Dorsolateral prefrontal cortex (tissue), 120 donors: ENCODE measurements at regions of chr7 and their contacts with region 1.

Region 1: GRCh38 chr7:124723012-124723411 is 42.6 kb downstream of the GPR37 start:
- DNase-seq: no peak
- H3K4me3 ChIP-seq: no peak overlapping the region
- H3K27ac ChIP-seq: peak overlapping the region in 58 of 59 donors; percentile 56 to 98 (median 94)
- H3K27me3 ChIP-seq: no peaks in the 10 kb centered on the region
- CTCF ChIP-seq: no peak

Region 2: GRCh38 chr7:124649397-124650029 is 73.5 kb before region 1 on chr7:
- intact Hi-C with region 1: loop called in 1 of 2 experiments (anchors 10 kb)
- DNase-seq: no peak
- H3K4me3 ChIP-seq: peak overlapping the region in 46 of 59 donors; percentile 1 to 55 (median 36)
- H3K27ac ChIP-seq: peak overlapping the region in 6 of 59 donors; percentile 19 to 53 (median 28)
- H3K27me3 ChIP-seq: no peaks in the 10 kb centered on the region
- CTCF ChIP-seq: no peak

Region 3: DNA sequence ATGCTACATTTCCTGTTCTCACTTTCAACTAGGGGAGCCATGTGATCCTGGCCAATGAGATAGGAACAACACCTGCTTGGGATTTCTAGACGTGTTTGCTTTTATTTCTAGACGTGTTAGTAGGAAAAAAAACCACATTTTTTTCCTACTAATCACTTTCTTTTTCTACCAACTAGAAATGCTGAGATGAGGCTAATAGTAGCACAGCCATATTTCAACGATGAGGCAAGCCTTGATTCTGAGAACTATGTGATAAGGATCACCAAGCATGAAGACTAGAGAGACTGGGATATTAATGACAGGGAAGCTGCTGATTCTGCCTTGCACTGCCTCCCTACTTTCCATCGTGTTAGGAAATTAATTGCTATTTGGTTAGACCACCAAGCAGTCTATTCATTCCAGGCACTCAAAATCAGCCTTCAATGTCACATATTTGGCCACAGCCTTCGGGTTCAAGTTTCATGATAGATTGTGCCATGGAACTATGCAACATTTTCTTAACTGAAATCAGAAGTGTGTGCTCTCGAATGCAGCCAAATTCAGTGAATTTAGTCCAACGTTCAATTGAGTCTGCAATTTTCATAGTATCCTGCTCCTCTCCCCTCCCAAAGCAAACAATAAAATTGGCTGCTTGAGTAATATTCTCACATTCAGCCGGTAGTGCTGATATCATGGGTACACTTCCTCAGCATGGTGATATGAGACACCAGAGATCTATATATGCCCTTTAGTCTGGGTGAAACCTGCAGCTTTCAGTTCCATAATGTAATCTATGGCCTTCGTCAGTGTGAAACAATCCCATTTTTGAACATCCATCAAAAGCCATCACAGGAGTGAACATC is 55.5 kb before region 1 on chr7:
- intact Hi-C with region 1: loop called in 1 of 2 experiments (anchors 5 kb)
- DNase-seq: no peak
- H3K4me3 ChIP-seq: peak overlapping the region in 4 of 59 donors; percentile 1 to 21 (median 8)
- H3K27ac ChIP-seq: peak overlapping the region in 5 of 59 donors; percentile 8 to 47 (median 18)
- H3K27me3 ChIP-seq: no peaks in the 10 kb centered on the region
- CTCF ChIP-seq: no peak

Region 4: DNA sequence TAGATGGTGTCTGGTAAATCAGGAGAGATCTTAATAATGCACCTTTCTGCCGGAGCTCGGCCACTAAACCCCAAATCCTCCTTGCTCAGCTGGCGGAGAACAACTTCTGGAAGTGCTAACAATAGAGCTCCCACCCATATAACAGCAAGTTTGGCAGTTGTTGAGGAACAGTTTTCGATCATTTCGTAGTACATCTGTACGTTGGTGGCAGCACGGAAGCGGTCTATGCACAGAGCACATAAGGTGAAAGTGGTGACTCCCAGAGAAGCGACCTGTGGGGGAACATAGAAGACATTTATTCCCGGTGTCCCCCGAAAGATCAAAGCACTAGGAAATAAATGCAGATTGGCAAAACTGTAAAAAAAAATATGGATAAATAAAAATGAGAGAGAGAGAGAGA is 24.1 kb after region 1 on chr7:
- intact Hi-C with region 1: loop called in 1 of 2 experiments (anchors 2 kb)
- DNase-seq: no peak
- H3K4me3 ChIP-seq: peak overlapping the region in 43 of 59 donors; percentile 1 to 92 (median 28)
- H3K27ac ChIP-seq: peak overlapping the region in 57 of 59 donors; percentile 3 to 99 (median 90)
- H3K27me3 ChIP-seq: no peaks in the 10 kb centered on the region
- CTCF ChIP-seq: no peak

Region 5: GRCh38 chr7:124754576-124755268 is 31.7 kb after region 1 on chr7:
- intact Hi-C with region 1: loop called in 1 of 2 experiments (anchors 2 kb)
- DNase-seq: no peak
- H3K4me3 ChIP-seq: peak overlapping the region in 57 of 59 donors; percentile 3 to 92 (median 71)
- H3K27ac ChIP-seq: peak overlapping the region in 58 of 59 donors; percentile 60 to 99 (median 90)
- H3K27me3 ChIP-seq: no peaks in the 10 kb centered on the region
- CTCF ChIP-seq: no peak

Region 6: GRCh38 chr7:124818807-124819206 is 95.8 kb after region 1 on chr7:
- intact Hi-C with region 1: no loop called
- DNase-seq: no peak
- H3K4me3 ChIP-seq: no peak overlapping the region
- H3K27ac ChIP-seq: no peak overlapping the region
- H3K27me3 ChIP-seq: no peaks in the 10 kb centered on the region
- CTCF ChIP-seq: no peak